MCF 10A (cell line): ENCODE measurements at regions of chr3 and their contacts with region 1.

Region 1: GRCh38 chr3:85576091-85576690 is 617.4 kb downstream of the CADM2 start:
- DNase-seq: peak; percentile 70
- H3K4me3 Mint-ChIP-seq: no peak overlapping the region
- H3K27ac Mint-ChIP-seq: no peak overlapping the region
- H3K4me1 Mint-ChIP-seq: no peaks in the 10 kb centered on the region
- H3K27me3 Mint-ChIP-seq: peaks cover 20% of the 10 kb centered on the region
- CTCF ChIP-seq: peak; percentile 77

Region 2: DNA sequence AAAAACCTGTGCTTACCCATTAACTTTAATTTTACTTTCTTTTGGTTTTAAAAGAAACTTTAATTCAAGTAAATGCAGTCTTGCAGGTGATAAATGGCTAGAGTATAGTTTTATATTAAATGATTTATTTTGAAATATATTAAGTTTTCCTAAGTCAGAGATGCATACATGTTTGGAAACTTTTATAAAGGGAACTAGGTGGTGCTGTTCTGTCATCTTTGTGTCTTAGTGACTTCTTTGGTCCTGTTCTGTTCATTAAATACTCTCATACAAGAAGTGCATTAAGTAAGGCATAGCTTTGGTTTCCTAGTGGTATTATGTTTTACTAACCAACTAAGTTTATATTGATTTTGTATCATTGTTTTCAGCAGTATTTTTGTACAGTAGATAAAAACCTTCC is 601.8 kb before region 1 on chr3:
- CTCF ChIA-PET with region 1: no interaction called
- POLR2A ChIA-PET with region 1: no interaction called
- intact Hi-C with region 1: loop called (anchors 10 kb)
- DNase-seq: peak; percentile 7
- H3K4me3 Mint-ChIP-seq: no peak overlapping the region
- H3K27ac Mint-ChIP-seq: no peak overlapping the region
- H3K4me1 Mint-ChIP-seq: no peaks in the 10 kb centered on the region
- H3K27me3 Mint-ChIP-seq: peaks cover 64% of the 10 kb centered on the region
- CTCF ChIP-seq: no peak

Region 3: DNA sequence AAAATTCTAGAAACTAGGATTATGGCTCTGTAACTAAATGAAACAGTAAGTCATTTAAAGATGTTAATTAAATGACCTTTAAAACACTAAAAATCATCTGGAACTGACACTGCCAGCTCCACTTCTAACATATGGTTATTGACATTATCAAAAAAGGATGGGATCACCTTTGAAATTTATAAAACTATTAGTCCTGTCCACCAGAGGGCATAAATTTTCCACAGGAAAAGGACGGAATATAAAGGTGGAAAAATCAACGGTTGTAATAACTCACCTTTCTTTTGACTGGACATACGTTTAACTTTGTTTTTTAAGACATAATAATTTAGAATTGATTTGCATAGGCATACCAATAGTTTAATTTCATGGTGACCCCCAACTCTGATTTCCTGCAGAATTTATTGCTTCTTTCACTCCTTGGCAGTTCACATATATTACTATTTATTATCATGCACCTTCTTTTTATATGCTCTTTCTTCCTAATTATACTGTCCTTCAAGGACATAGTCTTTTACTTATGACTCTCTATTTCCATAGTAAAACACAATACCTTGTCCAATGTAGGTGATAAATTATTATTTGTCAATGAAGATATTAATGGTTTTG is 271.7 kb before region 1 on chr3:
- CTCF ChIA-PET with region 1: interaction called, 8 read pairs
- POLR2A ChIA-PET with region 1: no interaction called
- intact Hi-C with region 1: loop called (anchors 1 kb)
- DNase-seq: peak; percentile 28
- H3K4me3 Mint-ChIP-seq: no peak overlapping the region
- H3K27ac Mint-ChIP-seq: no peak overlapping the region
- H3K4me1 Mint-ChIP-seq: no peaks in the 10 kb centered on the region
- H3K27me3 Mint-ChIP-seq: peaks cover 57% of the 10 kb centered on the region
- CTCF ChIP-seq: peak; percentile 25

Region 4: GRCh38 chr3:85360742-85361387 is 215.3 kb before region 1 on chr3:
- CTCF ChIA-PET with region 1: interaction called, 5 read pairs
- POLR2A ChIA-PET with region 1: no interaction called
- intact Hi-C with region 1: loop called (anchors 5 kb)
- DNase-seq: peak; percentile 57
- H3K4me3 Mint-ChIP-seq: no peak overlapping the region
- H3K27ac Mint-ChIP-seq: no peak overlapping the region
- H3K4me1 Mint-ChIP-seq: no peaks in the 10 kb centered on the region
- H3K27me3 Mint-ChIP-seq: peaks cover 34% of the 10 kb centered on the region
- CTCF ChIP-seq: peak; percentile 49